OCI-LY7 (cell line): ENCODE measurements at regions of chr11 and their contacts with region 1.

Region 1: GRCh38 chr11:57712256-57713150 is at the start of gene TMX2:
- DNase-seq: peak; percentile 98
- H3K4me3 ChIP-seq: peak within 1 kb of the TSS; percentile 89
- H3K27ac ChIP-seq: peak within 1 kb of the TSS; percentile 82
- H3K4me1 ChIP-seq: peaks cover 28% of the 10 kb centered on the region
- CTCF ChIP-seq: no peak
- total RNA-seq, gene TMX2: 53.3 and 54.9 TPM in 2 replicates

Region 2: DNA sequence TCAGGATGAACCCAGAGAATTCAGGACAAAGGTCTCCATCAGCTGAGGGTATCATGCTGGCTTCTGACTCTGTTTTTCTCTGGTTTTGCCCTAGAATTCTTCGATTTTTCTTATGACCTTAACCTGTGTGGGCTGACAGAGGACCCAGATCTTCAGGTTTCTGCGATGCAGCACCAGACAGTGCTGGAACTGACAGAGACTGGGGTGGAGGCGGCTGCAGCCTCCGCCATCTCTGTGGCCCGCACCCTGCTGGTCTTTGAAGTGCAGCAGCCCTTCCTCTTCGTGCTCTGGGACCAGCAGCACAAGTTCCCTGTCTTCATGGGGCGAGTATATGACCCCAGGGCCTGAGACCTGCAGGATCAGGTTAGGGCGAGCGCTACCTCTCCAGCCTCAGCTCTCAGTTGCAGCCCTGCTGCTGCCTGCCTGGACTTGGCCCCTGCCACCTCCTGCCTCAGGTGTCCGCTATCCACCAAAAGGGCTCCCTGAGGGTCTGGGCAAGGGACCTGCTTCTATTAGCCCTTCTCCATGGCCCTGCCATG is 98.2 kb before region 1 on chr11:
- CTCF ChIA-PET with region 1: no interaction called
- POLR2A ChIA-PET with region 1: no interaction called
- intact Hi-C with region 1: no loop called
- DNase-seq: no peak
- H3K4me3 ChIP-seq: no peak overlapping the region
- H3K27ac ChIP-seq: no peak overlapping the region
- H3K4me1 ChIP-seq: no peaks in the 10 kb centered on the region
- CTCF ChIP-seq: no peak

Region 3: DNA sequence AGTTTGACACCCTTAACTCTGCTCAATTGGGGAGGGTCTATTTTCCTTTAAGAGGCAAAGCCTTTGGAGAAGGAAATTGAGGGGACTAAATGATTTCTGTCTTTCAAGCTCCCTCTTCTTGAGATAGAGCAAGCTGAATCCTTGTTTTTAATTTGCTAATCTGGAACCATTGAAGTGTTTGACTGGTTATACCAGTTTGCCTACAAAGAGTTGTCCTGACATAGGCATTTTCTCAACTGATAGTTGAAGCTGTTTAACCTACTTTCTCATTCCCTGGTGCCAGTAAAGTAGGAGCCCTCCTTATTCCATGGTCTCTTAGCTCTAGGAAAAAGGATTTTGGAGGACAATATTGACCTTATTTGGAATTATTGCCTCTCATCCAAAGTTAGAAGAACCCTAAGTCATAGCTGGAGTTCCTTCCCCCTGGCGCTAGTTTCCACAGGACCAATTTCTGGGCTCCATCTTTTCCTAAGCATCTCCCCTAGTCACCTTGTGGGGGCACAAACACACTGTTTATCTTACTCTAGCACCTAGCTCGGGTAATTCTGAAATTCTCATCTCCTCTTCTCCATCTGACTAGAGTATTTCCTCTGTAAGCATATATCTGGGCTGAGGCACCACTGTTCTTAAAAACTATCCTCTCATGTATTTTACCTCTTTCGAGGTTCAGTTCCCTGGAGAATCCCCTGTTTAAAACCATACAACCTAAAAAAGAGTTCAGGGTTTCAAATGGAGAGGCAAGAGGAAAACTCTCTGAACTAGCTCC is 37.1 kb before region 1 on chr11:
- CTCF ChIA-PET with region 1: no interaction called
- POLR2A ChIA-PET with region 1: interaction called, 13 read pairs
- intact Hi-C with region 1: no loop called
- DNase-seq: no peak
- H3K4me3 ChIP-seq: no peak overlapping the region
- H3K27ac ChIP-seq: no peak overlapping the region
- H3K4me1 ChIP-seq: peaks cover 6% of the 10 kb centered on the region
- CTCF ChIP-seq: no peak

Region 4: GRCh38 chr11:57978686-57979531 is 266.4 kb after region 1 on chr11:
- CTCF ChIA-PET with region 1: no interaction called
- POLR2A ChIA-PET with region 1: no interaction called
- intact Hi-C with region 1: no loop called
- DNase-seq: no peak
- H3K4me3 ChIP-seq: no peak overlapping the region
- H3K27ac ChIP-seq: no peak overlapping the region
- H3K4me1 ChIP-seq: no peaks in the 10 kb centered on the region
- CTCF ChIP-seq: no peak